ENCODE measurements at regions of chr10 and their contacts with region 1.

Region 1: GRCh38 chr10:114103284-114103683 is 59.6 kb downstream of the ADRB1 start:
- DNase-seq: no peak
- ATAC-seq: peak; percentile 39 to 72 (median 64)
- H3K4me3 ChIP-seq: no peak overlapping the region
- H3K27ac ChIP-seq: no peak overlapping the region
- H3K4me1 ChIP-seq: peaks cover 0 to 27% (median 11%) of the 10 kb centered on the region in 9 donors
- H3K27me3 ChIP-seq: peaks cover 0 to 18% (median 0%) of the 10 kb centered on the region in 7 donors
- CTCF ChIP-seq: peak; percentile 13 to 75 (median 64)

Region 2: DNA sequence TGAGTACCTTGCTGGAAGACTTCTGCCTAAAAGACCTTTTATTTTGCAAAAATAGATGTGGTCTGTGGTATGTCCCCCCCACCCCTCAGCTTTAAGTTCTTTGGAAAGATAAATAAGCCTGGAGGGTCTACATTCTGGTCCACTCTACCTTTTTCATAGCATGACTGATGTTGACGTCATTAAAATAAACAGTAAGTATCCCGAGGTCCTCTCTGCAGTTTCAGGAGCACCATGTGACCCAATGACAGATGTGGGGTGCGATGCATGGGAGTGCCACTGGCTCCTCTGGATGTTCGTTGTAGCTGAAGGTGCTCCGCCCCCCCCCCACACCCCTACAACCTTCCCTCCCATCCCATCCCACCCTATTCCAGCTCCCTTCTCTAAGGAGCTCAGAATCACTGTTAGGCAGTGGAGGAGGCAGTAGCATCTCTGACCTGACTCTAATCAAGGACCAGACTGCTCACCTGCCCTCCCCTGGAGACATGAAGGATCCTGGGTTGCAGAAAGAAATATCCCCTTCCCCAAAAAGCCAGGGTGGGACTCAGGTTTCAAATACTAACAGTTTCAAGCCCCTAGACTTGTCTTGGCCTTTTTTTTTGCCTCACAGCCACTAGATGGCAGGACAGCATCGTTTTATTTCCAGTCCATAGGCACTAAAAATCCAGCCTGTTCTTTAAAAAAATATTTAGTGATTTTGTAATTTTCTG is 398.5 kb before region 1 on chr10:
- intact Hi-C with region 1: loop called in 9 of 10 experiments (anchors 5 to 10 kb)
- DNase-seq: no peak
- ATAC-seq: peak in 3 of 8 donors; percentile 34 to 51 (median 46)
- H3K4me3 ChIP-seq: no peak overlapping the region
- H3K27ac ChIP-seq: no peak overlapping the region
- H3K4me1 ChIP-seq: peaks cover 0 to 34% (median 7%) of the 10 kb centered on the region in 9 donors
- H3K27me3 ChIP-seq: no peaks in the 10 kb centered on the region
- CTCF ChIP-seq: peak; percentile 25 to 74 (median 64)

Region 3: DNA sequence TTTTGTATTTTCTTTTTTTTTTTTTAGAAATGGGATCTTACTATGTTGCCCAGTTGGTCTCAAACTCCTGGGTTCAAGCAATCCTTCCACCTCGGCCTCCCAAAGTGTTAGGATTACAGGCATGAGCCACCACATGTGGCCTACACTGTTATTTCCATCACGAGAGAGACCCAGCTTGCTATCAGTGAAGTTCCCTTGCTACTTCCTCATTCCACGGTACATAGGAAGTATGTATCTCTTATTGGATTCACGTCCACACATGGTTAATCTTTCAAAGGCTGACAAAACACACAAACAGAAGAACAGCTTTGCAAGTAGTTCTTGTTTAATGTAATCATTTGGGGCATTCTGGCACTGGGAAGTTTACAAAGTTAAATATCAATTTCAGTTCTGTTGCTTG is 300.3 kb before region 1 on chr10:
- intact Hi-C with region 1: loop called (anchors 1 to 5 kb)
- DNase-seq: no peak
- ATAC-seq: no peak
- H3K4me3 ChIP-seq: no peak overlapping the region
- H3K27ac ChIP-seq: no peak overlapping the region
- H3K4me1 ChIP-seq: no peaks in the 10 kb centered on the region
- H3K27me3 ChIP-seq: peaks cover 0 to 10% (median 0%) of the 10 kb centered on the region in 7 donors
- CTCF ChIP-seq: no peak

Region 4: GRCh38 chr10:113891476-113891875 is 211.8 kb before region 1 on chr10:
- intact Hi-C with region 1: loop called in 3 of 10 experiments (anchors 1 to 10 kb)
- DNase-seq: peak in 1 of 2 donors; percentile 13
- ATAC-seq: peak; percentile 53 to 93 (median 86)
- H3K4me3 ChIP-seq: no peak overlapping the region
- H3K27ac ChIP-seq: peak overlapping the region in 6 of 10 donors; percentile 9 to 72 (median 59)
- H3K4me1 ChIP-seq: peaks cover 0 to 51% (median 22%) of the 10 kb centered on the region in 9 donors
- H3K27me3 ChIP-seq: no peaks in the 10 kb centered on the region
- CTCF ChIP-seq: peak in 2 of 9 donors; percentile 38 to 39

Region 5: DNA sequence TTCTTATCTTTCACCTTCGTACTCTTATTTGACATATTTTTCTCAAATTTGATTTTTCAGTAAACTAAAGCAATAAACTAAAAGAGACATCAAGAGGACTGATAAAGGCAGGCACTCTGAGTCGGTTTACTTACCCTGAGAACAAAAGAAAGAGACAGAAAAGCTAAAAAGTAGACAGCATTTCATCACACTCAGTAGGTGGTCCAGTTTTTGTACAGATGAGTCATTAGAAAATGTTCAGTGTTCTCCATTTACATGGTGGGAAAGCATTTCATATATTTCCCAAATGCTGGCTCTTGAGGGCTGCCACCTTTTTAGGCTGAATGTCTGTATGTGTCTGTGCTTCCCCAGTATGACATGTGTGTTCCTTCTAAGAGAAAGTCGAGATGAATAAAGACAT is 196.1 kb before region 1 on chr10:
- intact Hi-C with region 1: loop called in 2 of 10 experiments (anchors 10 kb)
- DNase-seq: no peak
- ATAC-seq: no peak
- H3K4me3 ChIP-seq: no peak overlapping the region
- H3K27ac ChIP-seq: no peak overlapping the region
- H3K4me1 ChIP-seq: no peaks in the 10 kb centered on the region
- H3K27me3 ChIP-seq: no peaks in the 10 kb centered on the region
- CTCF ChIP-seq: no peak

Measured in heart right ventricle (tissue), 16 donors.